HepG2 (cell line): ENCODE measurements at regions of chr18 and their contacts with region 1.

Region 1: GRCh38 chr18:37385846-37386778 is 179.5 kb downstream of the CELF4 start:
- DNase-seq: peak; percentile 13
- ATAC-seq: no peak
- H3K4me3 ChIP-seq: no peak overlapping the region
- H3K27ac ChIP-seq: no peak overlapping the region
- H3K4me1 ChIP-seq: no peaks in the 10 kb centered on the region
- H3K27me3 ChIP-seq: peaks cover 4 to 8% of the 10 kb centered on the region in 2 experiments; a peak in 2 of 5 replicates
- CTCF ChIP-seq: peak; percentile 50
- EP300 ChIP-seq: no peak
- POLR2A ChIP-seq: no peak
- RAD21 ChIP-seq: no peak

Region 2: DNA sequence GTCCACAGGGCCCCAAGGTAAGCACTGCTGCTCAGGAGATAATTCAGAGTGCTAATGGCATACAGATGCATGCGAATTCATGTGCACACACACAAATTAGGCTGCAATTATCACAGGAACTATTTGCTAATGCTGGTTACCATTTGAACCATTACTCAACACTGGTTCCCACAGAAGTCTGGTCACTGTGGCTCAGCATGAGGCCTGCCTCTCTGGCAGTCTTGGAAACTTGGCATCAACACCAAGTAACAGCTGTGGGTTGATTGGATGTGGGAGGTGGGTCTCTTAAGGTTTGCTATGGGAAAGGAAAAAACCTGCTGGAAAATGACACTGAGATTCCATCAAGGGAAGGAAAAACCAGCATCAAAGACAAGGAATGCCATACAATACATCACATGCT is 74.5 kb after region 1 on chr18:
- CTCF ChIA-PET with region 1: no interaction called
- POLR2A ChIA-PET with region 1: no interaction called
- in situ Hi-C with region 1: no loop called
- intact Hi-C with region 1: no loop called
- DNase-seq: no peak
- ATAC-seq: no peak
- H3K4me3 ChIP-seq: no peak overlapping the region
- H3K27ac ChIP-seq: no peak overlapping the region
- H3K4me1 ChIP-seq: no peaks in the 10 kb centered on the region
- H3K27me3 ChIP-seq: peaks cover 3 to 29% of the 10 kb centered on the region in 2 experiments; a peak in 4 of 5 replicates
- CTCF ChIP-seq: no peak
- EP300 ChIP-seq: no peak
- POLR2A ChIP-seq: no peak
- RAD21 ChIP-seq: no peak

Region 3: DNA sequence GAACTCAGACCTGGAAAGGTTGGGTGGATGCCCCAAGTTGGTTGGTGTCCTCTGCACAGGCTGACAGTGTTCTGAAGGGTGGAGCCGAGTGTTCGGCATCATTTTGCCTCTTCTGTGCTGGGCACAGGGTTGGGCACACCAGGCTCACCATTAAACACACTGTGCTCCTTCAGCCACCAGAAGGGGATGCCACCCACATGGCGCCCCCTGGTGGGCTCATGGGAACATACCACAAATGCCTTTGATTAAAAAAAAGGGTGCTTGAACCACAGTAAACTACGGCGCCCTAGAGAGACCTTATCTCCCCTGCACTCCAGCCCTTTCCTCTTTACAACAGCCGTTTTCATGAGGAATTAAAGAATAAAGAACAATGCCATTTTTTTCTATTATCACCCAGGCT is 90.1 kb after region 1 on chr18:
- CTCF ChIA-PET with region 1: interaction called, 9 read pairs
- POLR2A ChIA-PET with region 1: no interaction called
- in situ Hi-C with region 1: loop called (anchors 10 kb)
- intact Hi-C with region 1: loop called (anchors 10 kb)
- DNase-seq: peak; percentile 15
- ATAC-seq: peak; percentile 69
- H3K4me3 ChIP-seq: no peak overlapping the region
- H3K27ac ChIP-seq: no peak overlapping the region
- H3K4me1 ChIP-seq: no peaks in the 10 kb centered on the region
- H3K27me3 ChIP-seq: peaks cover 3 to 14% of the 10 kb centered on the region in 2 experiments; a peak in 2 of 5 replicates
- CTCF ChIP-seq: peak; percentile 66
- EP300 ChIP-seq: no peak
- POLR2A ChIP-seq: no peak
- RAD21 ChIP-seq: 0 out of 2 replicates have a peak, but pooled peaks have one; percentile 19

Region 4: DNA sequence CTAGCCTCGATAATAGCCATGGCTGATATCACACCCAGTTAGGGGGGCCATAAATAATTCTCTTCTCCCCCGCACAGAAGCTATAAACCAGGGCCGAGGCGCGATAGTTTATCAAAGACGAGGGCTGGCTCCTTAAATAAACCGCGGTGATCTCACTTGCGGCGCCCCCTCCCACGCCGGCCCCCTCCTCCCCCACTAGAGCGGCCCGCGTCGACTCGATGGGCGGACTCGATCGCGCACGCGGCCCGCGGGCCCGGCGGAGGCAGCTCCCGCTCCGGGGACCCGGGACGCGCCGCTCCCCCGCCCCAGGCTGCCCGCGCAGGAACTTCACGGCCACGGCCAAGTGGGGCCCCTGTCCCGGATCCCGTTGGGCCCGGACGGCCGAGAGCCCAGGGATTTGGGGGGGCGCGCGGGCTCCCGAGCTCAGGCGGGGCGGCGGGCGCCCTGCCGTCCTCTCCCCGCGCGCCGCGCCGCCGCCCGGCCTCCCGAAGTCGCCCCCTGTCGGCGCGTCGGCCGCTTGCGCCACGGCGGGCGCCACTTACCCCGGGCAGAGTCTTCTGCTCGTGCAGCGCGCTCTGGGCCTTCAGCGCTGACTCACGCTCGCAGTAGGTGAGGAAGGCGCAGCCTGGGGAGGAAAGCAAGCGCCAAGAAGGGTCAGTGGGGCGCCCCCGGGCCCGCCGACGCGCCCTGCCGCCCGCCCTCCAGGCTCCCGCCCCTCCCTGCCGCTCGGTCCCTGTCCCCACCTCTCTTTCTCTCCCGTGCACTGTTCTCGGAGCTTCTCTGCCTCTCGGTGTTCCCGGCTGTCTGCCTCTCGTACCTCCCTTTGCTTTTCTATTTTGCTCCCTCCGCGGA is 99.1 kb after region 1 on chr18:
- CTCF ChIA-PET with region 1: no interaction called
- POLR2A ChIA-PET with region 1: no interaction called
- in situ Hi-C with region 1: no loop called
- intact Hi-C with region 1: loop called (anchors 10 kb)
- DNase-seq: no peak
- ATAC-seq: peak; percentile 91
- H3K4me3 ChIP-seq: no peak overlapping the region; a peak in 1 of 6 replicates
- H3K27ac ChIP-seq: no peak overlapping the region
- H3K4me1 ChIP-seq: no peaks in the 10 kb centered on the region
- H3K27me3 ChIP-seq: peaks cover 5 to 45% of the 10 kb centered on the region in 2 experiments; a peak in 3 of 5 replicates
- CTCF ChIP-seq: peak; percentile 49
- EP300 ChIP-seq: no peak
- POLR2A ChIP-seq: no peak
- RAD21 ChIP-seq: no peak